Heart left ventricle (tissue), 16 donors: ENCODE measurements at regions of chr12 and their contacts with region 1.

Region 1: GRCh38 chr12:22443379-22444316 is 100.7 kb downstream of the C2CD5 start:
- DNase-seq: peak in 4 of 5 donors; percentile 49 to 63 (median 56)
- ATAC-seq: peak; percentile 89 to 99 (median 96)
- H3K4me3 ChIP-seq: peak overlapping the region in 1 of 12 donors; percentile 4
- H3K27ac ChIP-seq: no peak overlapping the region
- H3K4me1 ChIP-seq: peaks cover 0 to 7% (median 0%) of the 10 kb centered on the region in 12 donors
- H3K27me3 ChIP-seq: no peaks in the 10 kb centered on the region
- CTCF ChIP-seq: peak; percentile 62 to 80 (median 68)
- POLR2A ChIP-seq: no peak

Region 2: DNA sequence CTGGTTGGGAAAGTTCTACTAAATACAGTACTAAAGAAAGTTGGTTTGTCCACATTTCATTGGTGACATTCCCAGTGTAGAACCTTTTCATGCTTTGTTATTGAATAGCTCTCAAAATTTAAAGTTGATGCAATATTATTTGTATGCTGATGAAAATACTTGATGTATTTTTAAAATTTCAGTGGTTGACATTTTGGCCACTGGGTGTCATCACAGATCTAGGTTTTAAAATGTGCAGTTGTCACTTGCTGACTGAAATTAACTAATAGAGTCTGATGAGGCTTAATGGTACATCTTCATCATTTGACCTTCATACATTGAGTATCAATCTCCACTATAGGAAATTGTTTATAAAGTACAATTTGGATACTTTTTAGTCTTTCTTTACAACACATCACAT is 360.5 kb before region 1 on chr12:
- intact Hi-C with region 1: loop called in 9 of 10 experiments (anchors 1 to 10 kb)
- DNase-seq: no peak
- ATAC-seq: no peak
- H3K4me3 ChIP-seq: no peak overlapping the region
- H3K27ac ChIP-seq: no peak overlapping the region
- H3K4me1 ChIP-seq: no peaks in the 10 kb centered on the region
- H3K27me3 ChIP-seq: no peaks in the 10 kb centered on the region
- CTCF ChIP-seq: peak; percentile 27 to 68 (median 55)
- POLR2A ChIP-seq: no peak

Region 3: DNA sequence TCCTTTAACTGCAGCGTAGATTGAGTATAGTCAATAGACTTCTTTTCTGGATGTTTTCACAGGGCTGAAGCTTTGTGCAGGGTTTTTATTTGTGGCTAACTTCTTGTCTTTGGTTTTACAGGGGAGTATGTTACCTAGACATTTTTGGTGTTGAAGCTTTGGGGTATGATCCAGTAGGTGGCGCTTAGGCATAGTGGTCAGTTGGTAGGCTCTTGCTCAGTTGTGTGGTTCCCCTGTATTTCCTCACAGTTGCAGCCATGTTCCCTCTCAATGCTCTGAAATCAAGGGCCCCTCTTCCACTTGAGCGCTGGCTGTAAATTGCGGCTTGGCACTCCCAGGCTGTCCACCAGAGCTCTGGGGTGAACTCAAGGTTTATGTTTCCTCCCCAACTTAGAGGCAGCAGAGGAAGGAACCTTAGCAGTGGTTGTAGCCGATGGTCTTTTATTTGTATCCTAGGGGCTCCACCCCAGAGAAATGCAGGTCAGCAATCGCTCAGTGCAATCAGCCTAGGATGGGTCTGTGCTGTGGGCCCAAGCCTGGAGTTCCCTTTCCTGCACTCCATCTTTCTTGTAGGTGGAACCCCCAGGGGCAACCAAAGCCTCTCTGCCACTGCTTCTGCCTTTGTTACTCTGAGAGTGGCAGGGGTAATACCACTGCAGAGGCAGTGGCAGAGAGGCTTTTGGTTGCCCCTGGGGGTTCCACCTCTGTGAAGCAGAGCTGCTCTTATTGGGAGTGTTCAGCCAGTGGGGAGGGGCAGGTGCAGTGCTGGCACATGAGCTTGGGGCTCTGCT is 342.5 kb before region 1 on chr12:
- intact Hi-C with region 1: loop called in 8 of 10 experiments (anchors 1 to 5 kb)
- DNase-seq: peak in 3 of 5 donors; percentile 26 to 42 (median 30)
- ATAC-seq: peak in 3 of 4 donors; percentile 68 to 74 (median 72)
- H3K4me3 ChIP-seq: no peak overlapping the region
- H3K27ac ChIP-seq: no peak overlapping the region
- H3K4me1 ChIP-seq: peaks cover 0 to 13% (median 0%) of the 10 kb centered on the region in 12 donors
- H3K27me3 ChIP-seq: no peaks in the 10 kb centered on the region
- CTCF ChIP-seq: peak; percentile 38 to 59 (median 53)
- POLR2A ChIP-seq: no peak